GM10248 (cell line): ENCODE measurements at regions of chr2 and their contacts with region 1.

Region 1: DNA sequence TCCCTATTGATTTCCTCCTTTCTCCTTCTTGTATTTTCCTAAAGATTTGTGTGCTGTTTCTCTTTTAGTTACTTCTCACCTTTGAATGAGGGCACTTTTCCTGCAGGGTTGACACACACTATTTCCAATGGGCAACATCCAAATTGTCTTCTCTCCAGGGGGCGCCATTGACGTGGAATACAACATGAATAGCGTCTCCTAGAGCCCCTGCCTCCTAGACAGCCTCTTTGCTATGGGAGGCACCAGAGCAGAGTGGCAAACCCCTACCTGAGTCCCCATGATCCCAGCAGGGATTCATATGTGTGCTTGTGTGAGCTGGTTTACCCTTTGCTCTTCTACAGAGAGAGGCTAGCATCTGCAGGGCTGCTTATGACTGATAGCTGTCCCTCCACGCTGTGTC is 61.3 kb upstream of the ITSN2 start:
- DNase-seq: peak; percentile 52
- CTCF ChIP-seq: peak; percentile 48

Region 2: DNA sequence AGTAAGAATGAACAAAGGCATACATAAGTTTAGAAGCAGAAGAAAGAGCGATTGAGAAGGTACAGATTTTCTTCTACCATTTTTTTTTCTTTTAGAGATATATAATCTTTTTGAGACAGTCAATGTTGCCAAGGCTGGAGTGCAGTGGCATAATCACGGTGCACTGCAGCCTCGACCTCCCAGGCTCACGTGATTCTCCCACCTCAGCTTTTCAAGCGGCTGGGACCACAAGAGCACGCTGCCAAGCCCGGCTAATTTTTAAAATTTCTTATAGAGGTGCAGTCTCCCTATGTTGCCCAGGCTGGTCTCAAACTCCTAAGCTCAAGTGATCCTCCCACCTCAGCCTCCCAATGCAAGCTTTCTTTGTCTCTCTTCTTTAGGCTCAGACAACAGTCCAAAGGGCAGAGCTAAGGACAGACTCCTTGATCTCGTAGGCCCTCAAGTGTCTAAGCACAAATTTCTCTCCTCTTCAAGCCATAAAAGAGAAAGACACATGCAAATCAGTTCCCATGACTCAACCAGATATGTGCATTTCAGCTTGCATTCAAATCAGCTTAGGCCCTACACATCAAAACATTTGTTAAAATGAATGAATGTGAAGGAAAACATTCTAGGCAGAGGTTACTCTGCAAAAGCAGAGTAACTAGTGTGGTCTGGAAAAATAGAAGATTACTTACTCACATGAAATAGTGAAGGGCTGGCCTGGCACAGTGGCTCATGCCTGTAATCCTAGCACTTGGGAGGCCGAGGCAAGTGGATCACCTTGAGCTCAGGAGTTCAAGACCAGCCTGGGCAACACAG is 79.4 kb before region 1 on chr2:
- CTCF ChIA-PET with region 1: no interaction called
- POLR2A ChIA-PET with region 1: no interaction called
- DNase-seq: peak; percentile 37
- CTCF ChIP-seq: peak; percentile 26

Region 3: GRCh38 chr2:24385366-24385765 is 36.3 kb before region 1 on chr2:
- CTCF ChIA-PET with region 1: no interaction called
- POLR2A ChIA-PET with region 1: no interaction called
- DNase-seq: no peak
- CTCF ChIP-seq: no peak

Region 4: DNA sequence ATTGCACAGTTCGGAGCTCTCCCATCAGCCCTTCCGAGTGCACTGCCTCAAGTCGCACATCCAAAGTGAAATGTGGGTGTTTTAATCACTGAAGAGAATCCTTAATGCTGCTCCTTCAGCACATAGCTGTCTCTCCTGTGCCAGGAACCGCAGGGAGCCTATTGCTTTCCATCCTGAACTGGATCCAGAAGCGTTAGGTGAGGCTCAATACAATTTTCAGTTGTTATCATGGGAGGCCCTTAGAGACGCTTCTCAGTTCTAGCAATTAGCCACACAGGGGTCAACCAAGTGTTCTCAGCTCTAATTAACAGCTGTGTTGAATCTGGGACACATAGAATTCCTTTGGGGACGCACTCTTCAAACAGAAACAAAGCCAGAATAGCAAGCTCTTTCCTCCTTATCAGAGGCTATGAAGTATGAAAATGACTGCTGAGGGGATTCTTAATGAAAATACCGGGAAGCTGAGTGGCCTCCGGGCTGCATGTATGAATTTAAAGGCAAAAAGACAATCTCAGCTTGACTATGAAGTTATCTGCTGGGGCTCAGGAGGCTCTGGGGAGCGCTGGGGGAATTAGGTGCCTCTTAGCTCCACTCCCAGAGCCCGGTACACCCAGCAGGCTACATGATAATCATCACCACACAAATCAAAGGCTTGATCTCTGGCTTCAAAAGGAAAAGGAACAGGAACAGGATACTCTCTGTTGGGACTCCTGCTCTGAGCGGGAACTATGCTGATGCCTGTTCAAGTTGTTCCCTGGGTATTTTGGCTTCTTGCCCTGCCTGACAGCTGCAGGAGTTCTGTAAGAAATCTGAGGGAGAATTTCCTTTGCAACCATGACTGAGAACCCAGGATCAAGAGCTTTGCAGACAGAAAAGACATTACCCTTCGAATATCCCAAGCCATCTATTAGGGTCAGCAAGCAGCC is 14.0 kb after region 1 on chr2:
- CTCF ChIA-PET with region 1: interaction called, 56 read pairs
- POLR2A ChIA-PET with region 1: no interaction called
- DNase-seq: no peak
- CTCF ChIP-seq: no peak